Astrocyte of the cerebellum (primary cell): ENCODE measurements at regions of chr3 and their contacts with region 1.

Region 1: GRCh38 chr3:126134219-126134975 is 46.0 kb downstream of the ALDH1L1 start:
- DNase-seq: peak; percentile 18
- H3K4me3 ChIP-seq: no peak overlapping the region
- CTCF ChIP-seq: peak; percentile 76

Region 2: GRCh38 chr3:125916376-125916978 is 217.9 kb before region 1 on chr3:
- in situ Hi-C with region 1: no loop called
- DNase-seq: peak; percentile 85
- H3K4me3 ChIP-seq: peak overlapping the region; percentile 68
- CTCF ChIP-seq: peak; percentile 34

Region 3: DNA sequence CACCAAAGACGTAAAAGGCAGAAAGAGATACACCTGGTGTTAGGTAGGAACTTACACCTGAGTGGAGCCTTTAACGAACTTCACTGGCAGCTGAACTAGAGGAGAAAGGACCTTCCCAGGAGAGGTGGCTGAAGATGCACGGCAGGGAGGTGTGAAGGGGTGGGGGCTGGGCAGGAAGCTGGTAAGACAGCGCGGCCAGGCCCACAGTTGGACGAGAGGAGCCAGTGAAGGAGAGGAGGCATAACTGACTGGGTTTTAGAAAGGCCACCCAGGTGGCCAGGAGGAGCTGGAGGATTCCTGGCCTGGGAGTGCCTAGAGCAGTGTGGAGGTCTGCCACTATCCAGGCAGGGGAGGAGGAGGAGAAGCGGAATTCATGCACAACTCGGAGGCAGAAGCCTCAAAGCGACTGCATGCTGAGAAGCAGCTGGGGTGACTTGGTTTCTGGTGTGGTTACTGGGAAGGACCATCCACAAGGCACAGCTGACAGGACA is 102.4 kb before region 1 on chr3:
- in situ Hi-C with region 1: no loop called
- DNase-seq: no peak
- H3K4me3 ChIP-seq: no peak overlapping the region
- CTCF ChIP-seq: no peak

Region 4: DNA sequence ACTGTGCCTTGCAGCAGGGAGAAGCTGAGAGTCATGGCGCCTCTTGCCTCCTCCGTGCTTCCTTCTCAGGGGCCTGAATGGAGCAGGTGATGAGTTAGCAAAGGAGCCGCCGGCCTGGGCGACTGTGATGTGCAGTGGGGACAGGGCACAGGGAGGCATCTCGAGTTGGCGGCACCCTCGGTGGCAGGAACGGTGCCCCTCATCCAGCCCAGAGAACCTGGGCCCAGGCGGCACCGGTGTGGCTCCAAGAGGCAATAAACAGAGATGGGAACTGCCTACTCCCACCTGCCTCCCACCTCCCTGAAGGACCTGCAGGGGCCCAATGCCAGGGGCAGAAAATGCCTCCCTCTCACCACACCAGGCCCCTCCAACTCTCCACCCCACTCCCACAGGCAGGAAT is 56.6 kb before region 1 on chr3:
- in situ Hi-C with region 1: no loop called
- DNase-seq: no peak
- H3K4me3 ChIP-seq: no peak overlapping the region
- CTCF ChIP-seq: no peak

Region 5: GRCh38 chr3:126194713-126195305 is 60.4 kb after region 1 on chr3:
- in situ Hi-C with region 1: loop called (anchors 5 kb)
- DNase-seq: no peak
- H3K4me3 ChIP-seq: no peak overlapping the region
- CTCF ChIP-seq: no peak